Activated CD4-positive, alpha-beta memory T cell treated with anti-CD3 and anti-CD28 coated beads, Interleukin-2, amount 10 ng/mL, durations not matched to agents 7 days and 5 days (primary cell): ENCODE measurements at regions of chr5 and their contacts with region 1.

Region 1: GRCh38 chr5:73451224-73452130 is 2.9 kb upstream of the FOXD1 start:
- DNase-seq: peak; percentile 66
- H3K4me3 Mint-ChIP-seq: no peak overlapping the region
- H3K27ac Mint-ChIP-seq: no peak overlapping the region
- H3K4me1 Mint-ChIP-seq: peaks cover 23% of the 10 kb centered on the region
- H3K27me3 Mint-ChIP-seq: peaks cover 74% of the 10 kb centered on the region

Region 2: DNA sequence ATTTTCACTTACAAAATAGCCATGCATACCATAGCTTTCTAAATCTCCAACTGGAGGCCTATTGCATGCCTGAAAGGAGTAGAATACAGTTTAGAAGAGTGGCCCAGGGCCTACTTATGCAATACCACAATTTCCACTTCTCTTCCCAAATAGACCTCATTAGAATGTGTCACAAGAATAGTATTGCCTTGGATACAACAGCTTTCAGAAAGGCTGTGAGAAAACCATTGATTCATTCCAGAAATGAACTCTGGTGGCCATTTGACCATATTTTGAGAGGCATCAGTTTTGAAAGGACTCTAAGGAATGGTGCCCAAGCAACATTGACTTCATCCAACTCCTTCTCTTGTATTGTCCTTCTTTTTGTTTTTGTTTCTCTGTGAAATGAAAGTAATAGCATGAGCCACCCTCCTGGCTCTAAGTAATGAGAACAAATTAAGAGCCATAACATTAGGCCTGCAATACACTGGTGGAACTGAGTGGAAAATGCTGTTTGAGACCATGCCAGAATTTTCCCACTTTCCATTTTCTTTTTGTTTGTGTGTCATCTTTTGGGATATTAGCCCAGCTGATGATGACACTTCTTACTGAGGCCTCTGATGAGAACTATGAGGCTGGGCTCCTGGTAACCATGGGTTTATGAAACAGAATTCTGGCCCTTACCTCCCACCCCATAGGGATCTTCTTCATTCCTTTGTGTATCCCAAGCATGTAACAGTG is 188.3 kb before region 1 on chr5:
- CTCF ChIA-PET with region 1: no interaction called
- POLR2A ChIA-PET with region 1: no interaction called
- DNase-seq: no peak
- H3K4me3 Mint-ChIP-seq: no peak overlapping the region
- H3K27ac Mint-ChIP-seq: no peak overlapping the region
- H3K4me1 Mint-ChIP-seq: no peaks in the 10 kb centered on the region
- H3K27me3 Mint-ChIP-seq: peaks cover 16% of the 10 kb centered on the region

Region 3: GRCh38 chr5:73312146-73312871 is 139.2 kb before region 1 on chr5:
- CTCF ChIA-PET with region 1: interaction called, 13 read pairs
- POLR2A ChIA-PET with region 1: no interaction called
- DNase-seq: no peak
- H3K4me3 Mint-ChIP-seq: no peak overlapping the region
- H3K27ac Mint-ChIP-seq: no peak overlapping the region
- H3K4me1 Mint-ChIP-seq: no peaks in the 10 kb centered on the region
- H3K27me3 Mint-ChIP-seq: peaks cover 66% of the 10 kb centered on the region

Region 4: GRCh38 chr5:73387601-73388305 is 63.7 kb before region 1 on chr5:
- CTCF ChIA-PET with region 1: interaction called, 13 read pairs
- POLR2A ChIA-PET with region 1: interaction called, 8 read pairs
- DNase-seq: peak; percentile 72
- H3K4me3 Mint-ChIP-seq: no peak overlapping the region
- H3K27ac Mint-ChIP-seq: peak overlapping the region; percentile 72
- H3K4me1 Mint-ChIP-seq: peaks cover 22% of the 10 kb centered on the region
- H3K27me3 Mint-ChIP-seq: peaks cover 55% of the 10 kb centered on the region

Region 5: DNA sequence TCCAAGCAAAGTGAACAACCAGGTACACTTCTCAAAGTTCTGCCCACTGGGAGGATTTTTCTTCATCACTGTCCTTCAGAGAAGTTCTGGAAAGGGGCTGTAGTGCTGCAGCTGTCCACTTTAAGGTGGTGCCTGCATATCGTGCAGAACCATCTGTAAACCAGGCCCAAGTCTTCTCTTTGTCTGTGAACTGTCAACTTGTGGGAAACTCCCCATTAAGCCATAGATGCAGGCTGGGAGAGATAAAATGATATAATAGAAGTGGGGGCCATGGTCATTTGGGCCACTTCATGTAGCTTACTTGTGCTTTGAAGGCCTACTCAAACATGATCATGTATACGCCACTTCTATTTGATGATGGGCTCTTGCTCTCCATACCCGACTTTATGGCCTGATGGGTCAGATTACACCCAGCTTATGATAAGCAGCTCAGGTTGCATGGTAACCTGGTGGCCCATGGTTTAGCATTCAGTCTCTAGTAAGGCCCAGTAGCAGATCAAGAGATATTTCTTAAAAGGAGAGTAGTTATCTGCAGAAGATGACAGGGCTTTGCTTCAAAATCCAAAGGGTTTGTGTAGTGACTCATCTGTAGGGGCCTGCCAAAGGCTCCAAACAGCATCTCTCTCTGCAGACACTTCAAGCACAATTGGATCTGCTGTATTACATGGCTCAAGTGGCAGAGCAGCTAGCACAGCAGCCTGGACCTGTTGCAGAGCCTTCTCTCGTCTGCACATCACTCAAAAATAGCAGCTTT is 31.1 kb after region 1 on chr5:
- CTCF ChIA-PET with region 1: no interaction called
- POLR2A ChIA-PET with region 1: no interaction called
- DNase-seq: no peak
- H3K4me3 Mint-ChIP-seq: no peak overlapping the region
- H3K27ac Mint-ChIP-seq: no peak overlapping the region
- H3K4me1 Mint-ChIP-seq: no peaks in the 10 kb centered on the region
- H3K27me3 Mint-ChIP-seq: peaks cover 22% of the 10 kb centered on the region